CD14-positive monocyte (primary cell): ENCODE measurements at regions of chrX and their contacts with region 1.

Region 1: DNA sequence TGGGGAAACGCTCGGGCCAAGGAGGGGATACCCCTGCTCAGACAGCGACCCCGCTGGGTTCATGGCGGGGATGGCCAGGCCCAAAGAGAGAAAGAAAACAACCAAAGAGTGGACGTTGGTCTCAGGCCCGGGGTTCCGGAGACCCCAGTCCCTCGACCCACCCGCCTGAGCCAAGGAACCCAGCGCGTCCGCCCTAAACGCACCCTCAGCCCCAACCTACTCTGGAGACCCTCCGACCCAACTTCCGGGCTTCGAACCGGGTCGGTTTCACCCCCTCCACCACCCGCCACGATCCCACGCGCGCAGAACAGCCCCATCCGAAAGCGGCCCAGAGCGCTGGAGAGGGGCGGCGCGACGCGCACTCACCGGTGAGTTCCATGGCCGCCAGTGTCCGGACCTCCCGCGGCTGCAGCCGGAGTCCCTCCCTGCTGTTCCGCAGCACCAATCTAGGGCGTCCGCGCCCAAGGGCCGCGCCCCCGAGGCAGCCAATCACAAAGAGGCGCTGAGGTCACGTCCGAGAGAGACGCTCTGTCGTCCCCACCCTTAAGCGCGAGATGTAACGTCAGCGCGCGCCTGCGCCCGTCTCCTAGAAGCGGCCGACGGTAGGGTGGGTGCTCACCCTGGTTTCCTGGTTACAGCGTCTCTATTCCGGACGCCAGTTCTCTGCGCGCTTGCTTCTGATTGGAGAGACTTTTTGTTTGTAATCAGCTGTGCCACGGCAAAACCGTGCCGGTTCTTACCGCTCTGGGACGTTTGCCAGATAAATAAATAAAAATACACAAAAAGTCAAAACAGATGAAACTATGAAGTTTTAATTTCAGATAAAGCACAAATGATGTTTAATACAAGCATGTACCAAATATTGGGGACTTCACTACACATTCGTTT is at the start of gene PIGA:
- DNase-seq: peak; percentile 93 to 97 (median 96)
- H3K4me3 ChIP-seq: peak within 1 kb of the TSS; percentile 70 to 90 (median 82)
- H3K4me3 Mint-ChIP-seq: peak within 1 kb of the TSS; percentile 90 to 92
- H3K27ac ChIP-seq: peak within 1 kb of the TSS; percentile 87 to 89
- H3K27ac Mint-ChIP-seq: peak within 1 kb of the TSS; percentile 94 to 99 (median 96)
- H3K4me1 ChIP-seq: peaks cover 4 to 12% of the 10 kb centered on the region in 2 donors
- H3K4me1 Mint-ChIP-seq: peaks cover 9% of the 10 kb centered on the region
- H3K27me3 ChIP-seq: peaks cover 0 to 29% of the 10 kb centered on the region in 2 donors
- H3K27me3 Mint-ChIP-seq: peaks cover 3 to 20% (median 4%) of the 10 kb centered on the region in 3 donors
- CTCF ChIP-seq: no peak
- polyA plus RNA-seq, gene PIGA: 6.3 to 36.1 (median 6.4) TPM

Region 2: GRCh38 chrX:15299941-15300851 is 35.2 kb before region 1 on chrX:
- intact Hi-C with region 1: loop called in 1 of 2 experiments (anchors 5 kb)
- DNase-seq: peak in 2 of 3 donors; percentile 17 to 20
- H3K4me3 ChIP-seq: no peak overlapping the region
- H3K4me3 Mint-ChIP-seq: no peak overlapping the region
- H3K27ac ChIP-seq: no peak overlapping the region
- H3K27ac Mint-ChIP-seq: peak overlapping the region in 1 of 7 donors; percentile 27
- H3K4me1 ChIP-seq: peaks cover 24 to 26% of the 10 kb centered on the region in 2 donors
- H3K4me1 Mint-ChIP-seq: peaks cover 29% of the 10 kb centered on the region
- H3K27me3 ChIP-seq: peaks cover 0 to 7% of the 10 kb centered on the region in 2 donors
- H3K27me3 Mint-ChIP-seq: peaks cover 0 to 14% (median 0%) of the 10 kb centered on the region in 3 donors
- CTCF ChIP-seq: peak; percentile 60